ENCODE measurements at regions of chr12 and their contacts with region 1.

Region 1: DNA sequence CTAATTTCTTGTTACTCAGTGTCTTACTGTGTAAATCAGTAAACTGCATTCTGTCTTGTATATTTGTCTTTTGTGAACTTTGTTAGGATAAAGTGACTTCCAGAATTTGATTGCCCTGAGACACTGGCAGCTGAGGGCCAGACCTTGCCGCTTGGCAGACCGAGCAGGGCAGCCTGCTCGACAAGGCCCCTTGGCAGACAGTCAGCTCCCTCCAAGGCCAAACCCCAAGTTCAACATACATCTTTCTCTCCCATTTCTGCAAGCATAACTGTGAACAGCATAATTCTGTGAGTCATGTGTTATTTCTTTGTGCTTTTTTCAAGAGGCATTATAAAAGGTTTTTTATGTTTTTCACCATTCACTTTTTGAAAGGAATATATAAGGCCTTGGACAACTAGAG is 39.2 kb upstream of the BMAL2 start:
- DNase-seq: no peak
- ATAC-seq: no peak

Region 2: DNA sequence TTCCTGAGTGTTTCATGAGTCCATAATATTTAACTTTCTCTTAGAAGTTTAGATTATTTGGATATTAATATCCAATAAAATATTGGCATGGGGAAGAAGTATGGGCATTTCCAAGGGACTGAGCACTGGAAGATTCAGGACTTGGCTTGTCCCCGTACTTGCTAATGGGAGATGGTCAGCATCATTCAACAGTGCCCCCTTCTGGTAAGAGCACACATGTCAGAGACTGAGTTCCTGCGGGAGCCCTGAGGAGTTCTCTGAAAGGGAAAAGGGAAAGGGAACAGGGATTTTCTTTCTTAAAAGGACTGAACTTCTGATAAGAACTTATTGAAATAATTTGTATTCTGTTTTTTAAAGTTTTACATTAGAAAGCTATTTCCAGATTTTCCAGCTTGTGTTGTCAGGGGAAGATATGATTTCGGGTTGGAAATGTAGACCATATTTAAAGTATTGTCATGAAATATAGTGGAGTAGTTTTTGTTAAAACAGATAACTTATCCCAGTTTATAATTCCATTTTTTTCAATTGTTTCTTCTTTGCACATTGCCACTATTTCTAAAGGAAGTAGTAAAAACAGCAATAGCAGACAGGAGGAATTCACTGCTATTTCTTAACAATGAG is 151.3 kb before region 1 on chr12:
- intact Hi-C with region 1: loop called (anchors 5 kb)
- DNase-seq: no peak
- ATAC-seq: peak; percentile 86